Cardiac septum (tissue), 1 donor: ENCODE measurements at regions of chr18 and their contacts with region 1.

Region 1: DNA sequence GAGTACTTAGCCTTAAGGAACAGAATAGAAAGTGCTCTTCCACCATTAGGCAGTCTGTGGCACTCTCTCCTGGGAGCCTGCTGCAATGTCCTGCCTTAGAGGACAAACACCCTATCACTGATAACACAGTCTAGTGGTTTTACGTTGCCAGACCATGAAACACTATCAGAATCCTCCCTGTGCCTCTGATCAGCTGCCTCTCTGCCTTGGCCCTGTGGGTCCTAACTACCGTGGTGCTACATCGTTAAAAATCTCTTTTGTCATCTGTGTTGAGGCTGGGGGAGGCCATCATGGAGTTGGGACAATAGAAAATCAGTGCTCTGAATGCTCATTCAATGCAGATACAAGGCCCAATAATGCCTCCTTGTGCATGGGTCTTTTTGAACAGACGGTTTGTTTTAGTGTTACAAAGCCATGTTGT is 11.9 kb upstream of the APCDD1 start:
- DNase-seq: no peak

Region 2: GRCh38 chr18:10015941-10016819 is 426.4 kb before region 1 on chr18:
- intact Hi-C with region 1: loop called (anchors 10 kb)
- DNase-seq: no peak